Activated CD4-positive, alpha-beta T cell treated with anti-CD3 and anti-CD28 coated beads for 36 hours (primary cell): ENCODE measurements at regions of chr1 and their contacts with region 1.

Region 1: DNA sequence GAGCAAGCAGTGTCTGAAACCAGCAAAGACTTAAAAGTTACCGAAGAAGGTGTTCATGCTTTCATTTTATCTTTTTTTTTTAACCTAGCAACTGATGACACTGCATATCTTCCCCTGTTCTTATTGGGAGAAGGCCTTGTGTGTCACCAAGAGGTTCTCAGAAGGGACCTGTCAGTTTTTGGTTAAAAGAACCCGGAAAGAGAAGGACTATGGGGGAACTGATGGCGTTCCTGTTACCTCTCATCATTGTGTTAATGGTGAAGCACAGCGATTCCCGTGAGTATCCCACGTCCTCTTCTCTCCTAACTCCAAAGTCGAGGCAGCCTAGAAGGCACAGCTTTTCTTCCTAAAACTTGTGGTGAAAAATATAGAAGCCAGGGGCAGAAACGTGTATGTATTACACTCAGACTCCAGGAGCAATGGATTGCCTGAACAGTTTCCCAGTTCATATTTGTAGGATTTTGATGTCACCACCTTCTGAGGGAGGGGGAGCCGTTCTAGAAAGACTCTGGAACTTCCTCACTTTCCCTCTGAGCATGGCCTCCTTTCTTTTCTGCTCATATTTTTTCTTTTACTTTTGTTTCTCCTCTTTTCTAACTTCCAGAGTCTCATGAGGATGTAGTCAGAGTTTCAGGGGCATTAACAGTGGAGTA is at the start of gene MR1:
- DNase-seq: peak; percentile 37
- ATAC-seq: peak; percentile 95
- H3K4me3 Mint-ChIP-seq: peak within 1 kb of the TSS; percentile 81
- H3K27ac Mint-ChIP-seq: peak within 1 kb of the TSS; percentile 100
- H3K4me1 Mint-ChIP-seq: peaks cover 55% of the 10 kb centered on the region
- H3K27me3 Mint-ChIP-seq: no peaks in the 10 kb centered on the region
- total RNA-seq, gene MR1: 21.5 to 25.3 TPM

Region 2: GRCh38 chr1:179888071-179888470 is 1145.9 kb before region 1 on chr1:
- CTCF ChIA-PET with region 1: no interaction called
- POLR2A ChIA-PET with region 1: no interaction called
- intact Hi-C with region 1: no loop called
- DNase-seq: no peak
- ATAC-seq: no peak
- H3K4me3 Mint-ChIP-seq: no peak overlapping the region
- H3K27ac Mint-ChIP-seq: peak overlapping the region; percentile 4
- H3K4me1 Mint-ChIP-seq: peaks cover 40% of the 10 kb centered on the region
- H3K27me3 Mint-ChIP-seq: no peaks in the 10 kb centered on the region

Region 3: GRCh38 chr1:181014477-181015250 is 19.3 kb before region 1 on chr1:
- CTCF ChIA-PET with region 1: interaction called, 5 read pairs
- POLR2A ChIA-PET with region 1: no interaction called
- intact Hi-C with region 1: loop called in 1 of 2 experiments (anchors 2 kb)
- DNase-seq: peak; percentile 54
- ATAC-seq: peak; percentile 78
- H3K4me3 Mint-ChIP-seq: no peak overlapping the region
- H3K27ac Mint-ChIP-seq: no peak overlapping the region
- H3K4me1 Mint-ChIP-seq: peaks cover 46% of the 10 kb centered on the region
- H3K27me3 Mint-ChIP-seq: no peaks in the 10 kb centered on the region

Region 4: DNA sequence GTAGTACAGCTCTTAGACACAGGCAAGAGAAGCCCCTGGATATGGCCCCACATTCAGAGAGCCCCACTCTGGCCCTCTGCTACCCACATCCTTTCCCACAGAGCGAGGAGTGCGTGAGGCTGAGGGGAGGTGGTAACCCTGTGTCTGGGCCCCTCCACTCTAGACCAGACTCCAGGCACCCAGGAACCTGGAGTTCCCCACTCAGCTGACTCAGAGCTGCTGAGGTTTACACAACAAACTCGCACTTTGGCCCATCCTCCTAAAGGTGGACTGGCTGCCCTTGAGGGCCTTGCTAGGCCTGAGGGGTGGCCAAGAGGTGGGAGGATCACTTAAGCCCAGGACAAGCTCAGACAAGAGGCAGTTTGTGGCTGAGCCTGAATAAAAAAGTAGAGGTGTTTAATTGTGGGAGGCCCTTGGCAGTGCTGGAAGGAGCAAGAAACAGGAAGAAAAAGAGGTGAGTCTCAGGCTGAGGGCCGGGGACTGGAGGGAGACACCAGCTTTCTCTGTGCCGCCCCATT is 10.6 kb after region 1 on chr1:
- CTCF ChIA-PET with region 1: interaction called, 5 read pairs
- POLR2A ChIA-PET with region 1: interaction called, 11 read pairs
- intact Hi-C with region 1: no loop called
- DNase-seq: peak; percentile 81
- ATAC-seq: peak; percentile 98
- H3K4me3 Mint-ChIP-seq: no peak overlapping the region
- H3K27ac Mint-ChIP-seq: peak overlapping the region; percentile 79
- H3K4me1 Mint-ChIP-seq: peaks cover 43% of the 10 kb centered on the region
- H3K27me3 Mint-ChIP-seq: no peaks in the 10 kb centered on the region

Region 5: DNA sequence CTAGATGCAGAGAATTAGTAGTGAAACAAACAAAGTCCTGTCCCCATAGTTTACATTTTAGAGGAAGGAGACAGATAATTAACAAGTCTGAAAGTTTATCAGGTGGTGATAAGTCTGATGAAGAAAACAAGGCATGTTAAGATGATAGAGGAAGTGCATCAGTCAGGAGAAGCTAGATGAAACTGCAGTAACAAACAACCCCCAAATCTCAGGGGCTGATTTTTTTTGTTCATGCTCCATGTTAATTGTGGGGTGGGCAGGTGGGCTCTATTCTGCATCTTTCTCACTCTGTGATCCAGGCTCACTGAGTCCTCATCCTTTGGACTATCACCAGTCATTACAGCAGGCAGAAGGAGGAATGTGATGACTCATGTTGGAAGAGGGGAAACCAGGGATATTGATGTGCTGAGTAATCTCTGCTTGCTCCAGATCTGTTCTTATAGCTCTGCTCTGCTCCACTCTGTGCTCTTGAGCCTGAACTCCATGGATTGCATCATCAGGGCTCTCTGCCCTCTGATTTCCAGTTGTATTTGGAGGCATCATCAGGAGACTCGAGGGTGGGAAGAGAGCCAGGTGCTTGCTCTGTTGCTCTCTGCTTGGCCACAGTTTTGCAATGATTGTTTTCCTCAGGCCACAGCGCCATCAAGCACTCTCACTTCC is 221.5 kb after region 1 on chr1:
- CTCF ChIA-PET with region 1: no interaction called
- POLR2A ChIA-PET with region 1: no interaction called
- intact Hi-C with region 1: no loop called
- DNase-seq: no peak
- ATAC-seq: no peak
- H3K4me3 Mint-ChIP-seq: no peak overlapping the region
- H3K27ac Mint-ChIP-seq: no peak overlapping the region
- H3K4me1 Mint-ChIP-seq: no peaks in the 10 kb centered on the region
- H3K27me3 Mint-ChIP-seq: no peaks in the 10 kb centered on the region

Region 6: GRCh38 chr1:181397845-181398244 is 363.9 kb after region 1 on chr1:
- CTCF ChIA-PET with region 1: no interaction called
- POLR2A ChIA-PET with region 1: no interaction called
- intact Hi-C with region 1: loop called in 1 of 2 experiments (anchors 5 kb)
- DNase-seq: peak; percentile 17
- ATAC-seq: peak; percentile 27
- H3K4me3 Mint-ChIP-seq: no peak overlapping the region
- H3K27ac Mint-ChIP-seq: peak overlapping the region; percentile 76
- H3K4me1 Mint-ChIP-seq: peaks cover 31% of the 10 kb centered on the region
- H3K27me3 Mint-ChIP-seq: no peaks in the 10 kb centered on the region